ENCODE measurements at regions of chr9 and their contacts with region 1.

Region 1: GRCh38 chr9:78439866-78440830 is 143.2 kb downstream of the PSAT1 start:
- DNase-seq: no peak
- H3K4me3 ChIP-seq: no peak overlapping the region
- H3K27ac ChIP-seq: no peak overlapping the region
- H3K4me1 ChIP-seq: no peaks in the 10 kb centered on the region
- H3K27me3 ChIP-seq: no peaks in the 10 kb centered on the region
- CTCF ChIP-seq: no peak
- POLR2A ChIP-seq: no peak

Region 2: DNA sequence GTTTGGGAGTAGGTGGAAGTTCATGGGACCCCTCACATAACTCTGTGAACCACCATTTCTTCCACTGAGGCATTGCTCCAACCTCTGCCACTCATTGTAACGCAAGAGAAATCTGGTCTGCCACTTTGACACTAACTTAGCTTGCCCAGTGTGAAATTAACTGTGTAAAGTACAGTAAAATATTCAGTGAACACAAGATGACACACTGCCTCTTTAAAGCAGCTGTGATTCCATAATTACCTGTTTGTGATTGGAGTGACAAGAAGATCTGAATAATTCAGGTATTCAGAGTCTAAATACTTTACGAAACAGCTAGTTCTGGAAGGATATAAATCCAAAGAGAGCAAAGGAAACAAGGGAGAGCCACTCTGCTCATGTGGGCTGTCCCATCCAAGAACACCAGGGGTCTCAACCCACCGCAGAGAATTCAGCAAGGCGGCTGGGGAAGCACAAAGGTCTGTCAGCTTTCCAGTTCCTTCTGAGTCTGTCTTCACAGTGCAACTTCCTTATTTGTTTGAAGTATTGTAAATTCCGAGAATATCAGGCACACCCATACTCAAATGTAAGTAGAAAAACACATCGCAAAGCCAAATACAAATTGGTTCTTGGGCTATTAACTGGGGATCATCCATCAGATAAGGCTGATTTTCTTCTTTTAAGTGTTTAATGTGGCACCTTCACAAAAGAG is 495.4 kb before region 1 on chr9:
- intact Hi-C with region 1: no loop called
- DNase-seq: peak; percentile 12
- H3K4me3 ChIP-seq: no peak overlapping the region
- H3K27ac ChIP-seq: peak overlapping the region in 1 of 2 donors; percentile 8
- H3K4me1 ChIP-seq: peaks cover 7% of the 10 kb centered on the region
- H3K27me3 ChIP-seq: no peaks in the 10 kb centered on the region
- CTCF ChIP-seq: peak in 1 of 4 experiments; percentile 12
- POLR2A ChIP-seq: no peak

Region 3: GRCh38 chr9:78601957-78602565 is 161.9 kb after region 1 on chr9:
- intact Hi-C with region 1: loop called (anchors 10 kb)
- DNase-seq: no peak
- H3K4me3 ChIP-seq: no peak overlapping the region
- H3K27ac ChIP-seq: no peak overlapping the region
- H3K4me1 ChIP-seq: no peaks in the 10 kb centered on the region
- H3K27me3 ChIP-seq: no peaks in the 10 kb centered on the region
- CTCF ChIP-seq: peak in 3 of 4 experiments; percentile 43 to 60 (median 59)
- POLR2A ChIP-seq: no peak

Measured in prostate gland (tissue), 2 donors.